ENCODE measurements at regions of chr15 and their contacts with region 1.

Region 1: GRCh38 chr15:93030430-93031105 is 58.4 kb downstream of the RGMA start:
- DNase-seq: no peak
- H3K4me3 ChIP-seq: no peak overlapping the region
- CTCF ChIP-seq: peak; percentile 79

Region 2: GRCh38 chr15:93018580-93018979 is 12.0 kb before region 1 on chr15:
- CTCF ChIA-PET with region 1: interaction called, 38 read pairs
- POLR2A ChIA-PET with region 1: no interaction called
- DNase-seq: no peak
- H3K4me3 ChIP-seq: no peak overlapping the region
- CTCF ChIP-seq: no peak

Region 3: DNA sequence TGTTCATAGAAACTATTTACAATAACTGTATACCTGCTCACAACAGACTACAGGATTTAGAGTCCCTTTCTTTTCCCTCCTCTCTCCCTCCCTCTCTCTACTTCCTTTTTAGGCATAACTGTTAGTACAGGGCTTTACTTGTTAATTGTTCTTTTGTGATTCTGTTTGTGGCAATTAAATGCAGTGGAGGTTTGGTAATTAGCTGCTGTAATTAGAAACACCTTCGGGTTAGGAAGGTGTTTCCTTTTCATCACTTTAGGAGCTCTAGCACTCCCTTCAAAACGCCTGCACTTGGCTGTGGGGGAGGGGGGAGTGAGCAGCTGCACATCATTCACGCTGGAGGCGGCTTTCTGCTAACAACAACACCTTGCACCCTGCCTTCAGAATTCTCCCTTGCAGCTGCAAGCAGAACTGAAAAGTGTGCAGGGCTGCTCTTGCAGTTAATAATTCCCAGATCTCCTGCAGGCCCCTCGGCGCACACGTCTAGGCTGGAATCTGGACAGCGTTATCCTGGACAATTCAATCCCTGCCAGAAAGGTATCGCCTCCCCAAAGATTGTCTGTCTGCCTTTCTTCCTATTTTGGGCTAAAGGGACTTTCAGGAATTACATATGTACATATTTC is 301.1 kb after region 1 on chr15:
- CTCF ChIA-PET with region 1: no interaction called
- POLR2A ChIA-PET with region 1: no interaction called
- DNase-seq: no peak
- H3K4me3 ChIP-seq: no peak overlapping the region
- CTCF ChIP-seq: no peak